ENCODE measurements at regions of chr1 and their contacts with region 1.

Region 1: DNA sequence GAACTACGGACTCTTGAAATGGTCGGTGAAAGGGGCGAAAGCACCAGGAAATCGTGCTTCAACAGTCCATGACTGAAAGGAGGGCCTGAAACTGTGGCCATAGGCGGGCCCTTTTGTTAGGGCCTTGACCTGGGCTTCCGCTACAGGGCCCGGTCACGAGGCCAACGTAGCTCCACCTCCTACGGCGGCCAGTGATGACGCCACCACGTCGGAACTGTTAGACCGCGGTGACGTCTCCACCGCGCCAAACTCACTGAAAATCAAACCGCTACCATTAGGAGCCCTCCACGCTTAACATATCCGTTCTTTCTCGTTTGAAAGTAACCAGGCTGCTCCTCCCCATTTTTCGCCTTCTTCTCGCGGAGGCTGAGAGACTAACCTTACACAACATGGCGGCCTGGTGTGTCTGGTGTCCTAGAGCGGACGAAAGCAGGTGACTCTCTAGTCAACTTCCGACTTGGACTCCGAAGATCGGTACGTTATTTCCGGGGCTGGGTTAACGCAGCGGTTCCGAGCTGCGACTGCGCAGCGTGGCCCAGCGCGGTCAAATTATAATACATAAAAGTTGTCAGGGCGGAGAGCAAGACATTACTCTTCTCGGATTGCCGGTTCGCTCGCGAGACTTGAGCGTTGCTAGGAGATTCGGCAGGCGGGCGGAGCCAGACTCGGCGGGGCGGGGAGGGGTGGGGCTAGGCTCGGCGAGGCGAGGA is 376 bp upstream of the CACYBP start:
- DNase-seq: peak; percentile 95 to 99 (median 97)
- ATAC-seq: peak; percentile 75
- H3K4me3 ChIP-seq: peak overlapping the region; percentile 70
- H3K4me3 Mint-ChIP-seq: no peak overlapping the region
- H3K27ac ChIP-seq: peak overlapping the region; percentile 96 to 100
- H3K27ac Mint-ChIP-seq: no peak overlapping the region
- H3K4me1 ChIP-seq: peaks cover 23% of the 10 kb centered on the region
- H3K4me1 Mint-ChIP-seq: peaks cover 46% of the 10 kb centered on the region
- H3K27me3 ChIP-seq: no peaks in the 10 kb centered on the region
- H3K27me3 Mint-ChIP-seq: no peaks in the 10 kb centered on the region
- CTCF ChIP-seq: no peak

Region 2: DNA sequence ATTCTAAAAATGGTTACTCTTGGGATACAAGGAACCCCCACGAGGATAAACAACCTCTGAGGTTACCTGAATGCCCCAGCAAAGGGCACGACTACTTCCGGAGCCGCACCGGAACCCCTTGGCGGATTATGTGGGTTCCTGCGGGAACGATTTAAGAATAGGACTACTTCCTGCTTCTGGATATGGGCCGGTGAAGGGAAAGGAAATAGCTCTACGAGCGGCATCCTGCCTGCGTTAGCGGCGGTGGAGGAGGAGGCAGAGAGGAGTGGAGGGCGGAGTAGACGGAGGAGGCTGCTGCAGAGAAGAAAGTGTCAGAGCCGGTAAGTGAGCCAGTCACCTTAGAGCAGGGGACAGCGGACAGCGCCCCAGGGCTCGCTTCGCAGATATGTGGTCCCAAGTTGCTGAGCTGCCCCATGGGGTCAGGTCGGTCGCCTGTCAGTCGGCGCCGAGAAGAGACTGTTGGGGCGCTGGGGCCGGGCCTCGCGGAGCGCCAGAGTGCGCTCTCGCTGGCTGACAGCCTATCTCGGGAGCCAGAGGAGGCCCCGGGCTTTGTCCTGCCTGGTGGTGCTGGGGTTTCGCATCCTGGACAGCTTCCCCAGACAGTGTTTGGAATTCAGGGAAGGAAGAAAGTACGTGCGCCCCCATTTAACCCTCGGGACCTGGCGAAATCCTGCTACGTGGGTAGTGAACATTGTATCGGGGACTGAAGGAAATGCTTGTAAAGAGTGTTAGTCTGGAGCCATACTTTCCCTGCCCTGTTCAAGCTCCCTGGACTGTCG is 1284.4 kb before region 1 on chr1 and contains the start of gene KLHL20:
- CTCF ChIA-PET with region 1: interaction called, 3 read pairs
- POLR2A ChIA-PET with region 1: no interaction called
- intact Hi-C with region 1: loop called in 1 of 2 experiments (anchors 10 kb)
- DNase-seq: peak; percentile 70 to 94 (median 81)
- ATAC-seq: peak; percentile 97
- H3K4me3 ChIP-seq: peak within 1 kb of the TSS; percentile 63
- H3K4me3 Mint-ChIP-seq: peak within 1 kb of the TSS; percentile 97
- H3K27ac ChIP-seq: peak within 1 kb of the TSS; percentile 73 to 81
- H3K27ac Mint-ChIP-seq: peak within 1 kb of the TSS; percentile 91
- H3K4me1 ChIP-seq: peaks cover 8% of the 10 kb centered on the region
- H3K4me1 Mint-ChIP-seq: peaks cover 36% of the 10 kb centered on the region
- H3K27me3 ChIP-seq: peaks cover 4 to 19% of the 10 kb centered on the region in 2 experiments
- H3K27me3 Mint-ChIP-seq: peaks cover 18% of the 10 kb centered on the region
- CTCF ChIP-seq: no peak
- total RNA-seq, gene KLHL20: 29.4 to 30.4 TPM

Region 3: DNA sequence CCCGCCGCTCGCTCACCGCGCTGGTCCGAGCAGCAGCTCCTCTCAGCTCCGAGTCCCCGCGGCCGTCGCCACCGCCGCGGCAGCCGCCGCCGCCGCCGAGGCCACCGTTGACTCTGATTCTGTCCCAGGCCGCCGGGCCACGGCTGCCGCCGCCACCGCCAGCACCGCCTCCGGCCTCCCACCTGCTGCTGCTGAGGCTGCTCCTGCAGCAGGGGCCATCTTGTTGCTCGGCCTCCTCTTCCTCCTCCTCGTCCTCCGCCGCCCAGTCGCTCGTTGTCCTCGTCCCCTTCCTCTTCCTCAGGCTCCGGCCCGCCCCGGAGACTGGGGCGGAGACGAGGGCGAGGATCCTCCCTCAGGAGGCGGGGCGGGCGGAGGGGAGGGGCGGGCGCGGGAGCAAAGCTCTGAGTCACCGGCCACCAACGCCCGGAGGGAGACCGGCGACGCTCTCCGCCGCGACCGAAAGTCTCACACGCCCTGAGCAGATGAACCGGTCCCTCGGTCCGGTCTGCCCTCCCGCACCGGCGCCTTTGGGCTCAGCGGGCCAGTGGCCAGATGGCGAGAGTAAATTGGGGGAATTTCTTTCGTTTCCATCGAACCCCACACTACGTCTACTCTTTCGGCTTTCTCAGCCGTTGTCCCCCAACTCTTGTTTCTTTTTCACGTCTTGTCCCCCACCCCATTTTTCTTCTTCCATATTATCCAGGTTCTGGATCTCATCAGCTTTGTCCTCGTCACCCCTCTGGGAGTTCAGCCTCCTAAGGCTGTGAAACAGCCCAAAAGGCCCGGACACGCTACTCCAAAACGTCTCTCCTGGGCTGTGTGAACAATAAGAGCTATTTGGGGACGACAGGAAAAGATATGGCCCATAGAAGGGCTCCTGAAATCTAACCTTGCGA is 977.0 kb before region 1 on chr1 and contains the start of gene RC3H1:
- CTCF ChIA-PET with region 1: no interaction called
- POLR2A ChIA-PET with region 1: interaction called, 10 read pairs
- intact Hi-C with region 1: no loop called
- DNase-seq: peak; percentile 80 to 94 (median 88)
- ATAC-seq: peak; percentile 91
- H3K4me3 ChIP-seq: peak within 1 kb of the TSS; percentile 97
- H3K4me3 Mint-ChIP-seq: peak within 1 kb of the TSS; percentile 99
- H3K27ac ChIP-seq: peak within 1 kb of the TSS; percentile 85 to 90
- H3K27ac Mint-ChIP-seq: peak within 1 kb of the TSS; percentile 91
- H3K4me1 ChIP-seq: peaks cover 27% of the 10 kb centered on the region
- H3K4me1 Mint-ChIP-seq: peaks cover 55% of the 10 kb centered on the region
- H3K27me3 ChIP-seq: no peaks in the 10 kb centered on the region
- H3K27me3 Mint-ChIP-seq: no peaks in the 10 kb centered on the region
- CTCF ChIP-seq: no peak
- total RNA-seq, gene RC3H1: 38.0 to 40.4 TPM

Region 4: DNA sequence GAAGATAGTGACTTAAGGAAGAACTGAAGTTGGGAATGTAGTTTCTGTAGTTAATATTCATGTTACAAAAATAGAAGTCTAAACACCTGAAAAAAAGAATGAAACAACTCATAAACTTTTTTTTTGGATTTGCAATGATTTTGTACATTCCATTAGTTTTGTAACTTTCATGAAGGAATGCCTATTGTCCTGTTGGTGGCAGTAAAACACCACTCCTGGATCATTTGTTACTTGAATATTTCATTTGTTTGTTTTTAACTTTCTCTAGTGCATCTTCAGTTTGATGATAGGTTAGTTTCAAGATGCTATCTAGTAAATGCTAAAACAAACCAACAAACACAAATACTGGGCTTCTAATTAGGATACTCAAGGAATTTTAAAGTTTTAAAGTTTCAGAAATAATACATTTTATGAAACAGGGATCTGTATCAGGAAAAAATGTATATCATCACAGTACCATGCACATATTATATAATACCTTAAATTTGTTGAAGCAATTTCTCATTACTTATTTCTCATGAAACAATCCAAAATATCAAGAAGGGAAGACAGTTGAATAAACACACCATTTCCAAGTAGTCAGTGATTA is 229.3 kb before region 1 on chr1:
- CTCF ChIA-PET with region 1: no interaction called
- POLR2A ChIA-PET with region 1: interaction called, 8 read pairs
- intact Hi-C with region 1: loop called (anchors 1 kb)
- DNase-seq: peak in 4 of 14 experiments; percentile 28 to 76 (median 70)
- ATAC-seq: peak; percentile 78
- H3K4me3 ChIP-seq: no peak overlapping the region
- H3K4me3 Mint-ChIP-seq: no peak overlapping the region
- H3K27ac ChIP-seq: no peak overlapping the region
- H3K27ac Mint-ChIP-seq: no peak overlapping the region
- H3K4me1 ChIP-seq: no peaks in the 10 kb centered on the region
- H3K4me1 Mint-ChIP-seq: no peaks in the 10 kb centered on the region
- H3K27me3 ChIP-seq: no peaks in the 10 kb centered on the region
- H3K27me3 Mint-ChIP-seq: no peaks in the 10 kb centered on the region
- CTCF ChIP-seq: peak; percentile 84

Region 5: GRCh38 chr1:174883409-174883808 is 116.0 kb before region 1 on chr1:
- CTCF ChIA-PET with region 1: interaction called, 4 read pairs
- POLR2A ChIA-PET with region 1: interaction called, 11 read pairs
- intact Hi-C with region 1: loop called (anchors 2 to 5 kb)
- DNase-seq: peak in 4 of 14 experiments; percentile 12 to 50 (median 32)
- ATAC-seq: peak; percentile 44
- H3K4me3 ChIP-seq: no peak overlapping the region
- H3K4me3 Mint-ChIP-seq: no peak overlapping the region
- H3K27ac ChIP-seq: no peak overlapping the region
- H3K27ac Mint-ChIP-seq: no peak overlapping the region
- H3K4me1 ChIP-seq: no peaks in the 10 kb centered on the region
- H3K4me1 Mint-ChIP-seq: peaks cover 11% of the 10 kb centered on the region
- H3K27me3 ChIP-seq: no peaks in the 10 kb centered on the region
- H3K27me3 Mint-ChIP-seq: no peaks in the 10 kb centered on the region
- CTCF ChIP-seq: peak; percentile 8

Region 6: DNA sequence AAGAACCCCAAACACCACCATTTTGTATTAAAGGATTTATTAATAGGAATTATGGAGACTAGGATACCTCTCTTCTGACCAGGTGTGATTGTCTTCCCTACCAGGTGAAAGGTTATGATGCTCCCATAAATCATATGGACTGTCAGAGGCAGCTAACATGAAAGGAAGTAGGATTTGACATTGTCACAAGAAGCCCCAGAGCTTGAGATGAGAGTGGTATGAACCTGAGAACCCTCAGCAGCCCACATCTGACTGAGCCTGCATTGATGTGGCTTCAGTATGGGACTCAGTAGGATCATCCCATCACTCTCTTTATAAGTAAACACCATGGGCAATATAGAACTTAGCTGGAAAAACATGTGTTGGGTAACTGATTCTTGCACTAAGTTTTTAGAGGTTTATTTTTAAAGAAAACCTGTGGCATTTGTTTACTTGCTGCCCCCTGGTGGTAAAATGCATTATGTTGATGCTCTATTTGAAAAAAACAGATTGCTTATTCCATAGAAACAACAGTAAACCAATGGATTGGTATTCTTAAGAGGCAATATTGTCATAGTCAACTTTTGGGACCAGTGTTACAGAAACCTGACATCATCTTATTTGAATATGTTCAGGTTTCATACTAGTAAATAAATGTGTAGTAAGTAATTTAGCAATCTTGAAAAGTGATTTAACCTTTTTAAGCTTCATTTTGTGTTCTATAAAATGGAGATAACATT is 16.2 kb before region 1 on chr1:
- CTCF ChIA-PET with region 1: interaction called, 16 read pairs
- POLR2A ChIA-PET with region 1: interaction called, 55 read pairs
- intact Hi-C with region 1: no loop called
- DNase-seq: peak in 8 of 14 experiments; percentile 25 to 81 (median 52)
- ATAC-seq: peak; percentile 41
- H3K4me3 ChIP-seq: no peak overlapping the region
- H3K4me3 Mint-ChIP-seq: no peak overlapping the region
- H3K27ac ChIP-seq: no peak overlapping the region
- H3K27ac Mint-ChIP-seq: peak overlapping the region; percentile 75
- H3K4me1 ChIP-seq: peaks cover 3% of the 10 kb centered on the region
- H3K4me1 Mint-ChIP-seq: peaks cover 45% of the 10 kb centered on the region
- H3K27me3 ChIP-seq: no peaks in the 10 kb centered on the region
- H3K27me3 Mint-ChIP-seq: no peaks in the 10 kb centered on the region
- CTCF ChIP-seq: peak; percentile 78

Region 7: DNA sequence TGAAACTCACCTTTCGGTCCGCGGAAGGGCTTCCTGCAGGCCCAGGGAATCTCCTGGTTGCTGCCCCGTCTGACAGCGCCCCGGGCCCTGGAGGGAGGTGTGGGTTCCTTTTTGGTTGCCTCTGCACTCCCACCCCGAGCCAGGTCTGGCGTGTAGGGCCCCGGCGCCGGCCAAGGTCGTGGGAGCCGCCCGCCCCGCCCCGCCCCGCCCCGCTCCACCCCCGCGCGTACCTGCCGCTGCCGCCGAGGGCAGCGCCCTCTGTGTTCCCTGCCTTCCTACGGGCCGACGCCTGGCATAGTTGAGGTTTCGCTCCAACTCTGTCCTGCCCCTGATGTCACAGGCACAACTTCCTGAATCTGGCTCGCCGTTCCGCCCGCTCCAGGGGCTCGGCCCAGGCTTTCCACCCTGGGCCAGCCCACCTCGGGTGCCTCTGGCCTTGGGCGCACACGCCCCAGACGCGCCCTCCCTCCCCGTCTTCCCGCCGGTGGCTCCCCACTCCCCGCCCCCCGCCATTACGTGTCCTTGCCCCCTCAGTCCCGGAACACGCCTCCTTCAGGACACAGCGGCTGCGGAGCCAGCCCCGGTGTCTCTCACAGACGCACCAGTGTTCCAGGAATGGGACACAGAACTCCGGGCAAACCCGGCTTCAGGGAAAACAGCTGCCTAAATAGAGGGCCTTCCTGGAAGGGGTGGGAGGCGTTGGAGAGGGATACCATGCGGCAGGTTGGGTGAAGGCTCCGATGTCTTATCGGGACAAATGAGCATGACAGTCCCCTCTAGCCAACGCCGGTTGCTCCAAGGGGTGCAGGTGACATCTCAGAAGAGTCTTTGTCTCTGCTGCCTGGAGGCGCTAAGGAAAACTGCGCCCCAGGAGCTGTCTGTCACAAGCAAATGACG is 193.5 kb after region 1 on chr1 and contains the start of gene KIAA0040:
- CTCF ChIA-PET with region 1: no interaction called
- POLR2A ChIA-PET with region 1: interaction called, 15 read pairs
- intact Hi-C with region 1: no loop called
- DNase-seq: peak in 13 of 14 experiments; percentile 18 to 81 (median 45)
- ATAC-seq: peak; percentile 57
- H3K4me3 ChIP-seq: peak within 1 kb of the TSS; percentile 98
- H3K4me3 Mint-ChIP-seq: peak within 1 kb of the TSS; percentile 97
- H3K27ac ChIP-seq: peak within 1 kb of the TSS; percentile 60 to 76
- H3K27ac Mint-ChIP-seq: peak within 1 kb of the TSS; percentile 97
- H3K4me1 ChIP-seq: peaks cover 54% of the 10 kb centered on the region
- H3K4me1 Mint-ChIP-seq: peaks cover 56% of the 10 kb centered on the region
- H3K27me3 ChIP-seq: no peaks in the 10 kb centered on the region
- H3K27me3 Mint-ChIP-seq: no peaks in the 10 kb centered on the region
- CTCF ChIP-seq: no peak
- total RNA-seq, gene KIAA0040: 13.5 to 14.5 TPM

Region 8: DNA sequence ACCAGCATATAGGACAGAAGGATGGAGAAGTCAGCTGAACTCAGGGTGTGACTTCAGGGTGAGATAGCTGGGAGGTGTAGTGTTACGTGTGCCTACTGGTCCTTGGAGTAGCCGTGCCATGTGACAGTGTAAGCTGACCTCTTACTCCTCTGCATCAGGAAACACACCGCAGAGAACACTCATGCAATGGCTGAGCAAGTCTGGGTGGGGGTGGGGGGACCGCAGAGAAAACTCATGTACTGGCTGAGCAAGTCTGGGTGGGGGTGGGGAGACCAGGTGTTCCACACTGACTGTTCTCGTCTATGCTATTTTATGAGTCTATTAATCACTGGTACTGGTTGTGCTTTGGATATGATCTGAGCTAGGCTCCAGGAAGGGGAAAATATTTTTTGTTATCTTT is 1696.7 kb after region 1 on chr1:
- CTCF ChIA-PET with region 1: no interaction called
- POLR2A ChIA-PET with region 1: no interaction called
- intact Hi-C with region 1: no loop called
- DNase-seq: no peak
- ATAC-seq: no peak
- H3K4me3 ChIP-seq: no peak overlapping the region
- H3K4me3 Mint-ChIP-seq: no peak overlapping the region
- H3K27ac ChIP-seq: no peak overlapping the region
- H3K27ac Mint-ChIP-seq: no peak overlapping the region
- H3K4me1 ChIP-seq: no peaks in the 10 kb centered on the region
- H3K4me1 Mint-ChIP-seq: no peaks in the 10 kb centered on the region
- H3K27me3 ChIP-seq: peaks cover 0 to 2% of the 10 kb centered on the region in 2 experiments
- H3K27me3 Mint-ChIP-seq: no peaks in the 10 kb centered on the region
- CTCF ChIP-seq: no peak